CD8-positive, alpha-beta T cell (primary cell): ENCODE measurements at regions of chr5 and their contacts with region 1.

Region 1: DNA sequence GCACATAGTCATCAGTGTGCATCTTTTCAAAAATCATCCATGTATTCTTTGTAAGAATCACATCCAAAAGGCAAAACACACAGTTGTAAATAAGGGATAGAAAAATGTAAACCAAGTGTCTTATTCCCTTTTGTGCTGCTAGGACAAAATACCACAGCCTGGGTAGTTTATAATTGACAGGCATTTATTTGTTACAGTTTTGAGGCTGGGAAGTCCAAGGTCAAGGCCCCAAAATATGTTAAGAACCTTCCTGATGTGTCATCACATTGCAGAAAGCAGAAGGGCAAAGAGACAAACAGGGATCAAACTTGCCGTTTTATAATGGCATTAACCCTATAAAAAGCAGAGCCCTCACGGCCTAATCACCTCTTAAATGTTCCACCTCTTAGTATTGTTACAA is 364.9 kb downstream of the MED10 start:
- DNase-seq: no peak
- ATAC-seq: no peak
- H3K4me3 ChIP-seq: no peak overlapping the region
- H3K4me3 Mint-ChIP-seq: no peak overlapping the region
- H3K27ac ChIP-seq: no peak overlapping the region
- H3K27ac Mint-ChIP-seq: no peak overlapping the region
- H3K4me1 ChIP-seq: no peaks in the 10 kb centered on the region
- H3K4me1 Mint-ChIP-seq: no peaks in the 10 kb centered on the region
- H3K27me3 ChIP-seq: no peaks in the 10 kb centered on the region
- H3K27me3 Mint-ChIP-seq: peaks cover 5% of the 10 kb centered on the region
- CTCF ChIP-seq: no peak

Region 2: GRCh38 chr5:4361753-4362152 is 1651.7 kb before region 1 on chr5:
- CTCF ChIA-PET with region 1: no interaction called
- POLR2A ChIA-PET with region 1: no interaction called
- intact Hi-C with region 1: loop called in 1 of 2 experiments (anchors 10 kb)
- DNase-seq: no peak
- ATAC-seq: no peak
- H3K4me3 ChIP-seq: no peak overlapping the region
- H3K4me3 Mint-ChIP-seq: no peak overlapping the region
- H3K27ac ChIP-seq: no peak overlapping the region
- H3K27ac Mint-ChIP-seq: no peak overlapping the region
- H3K4me1 ChIP-seq: no peaks in the 10 kb centered on the region
- H3K4me1 Mint-ChIP-seq: no peaks in the 10 kb centered on the region
- H3K27me3 ChIP-seq: no peaks in the 10 kb centered on the region
- H3K27me3 Mint-ChIP-seq: no peaks in the 10 kb centered on the region
- CTCF ChIP-seq: no peak